ENCODE measurements at regions of chr1 and their contacts with region 1.

Region 1: GRCh38 chr1:66271216-66271903 is 262.6 kb upstream of the SGIP1 start:
- DNase-seq: no peak
- ATAC-seq: peak; percentile 91
- H3K4me3 ChIP-seq: no peak overlapping the region
- H3K27ac ChIP-seq: peak overlapping the region; percentile 75
- H3K4me1 ChIP-seq: peaks cover 57% of the 10 kb centered on the region
- H3K27me3 ChIP-seq: no peaks in the 10 kb centered on the region
- CTCF ChIP-seq: no peak

Region 2: DNA sequence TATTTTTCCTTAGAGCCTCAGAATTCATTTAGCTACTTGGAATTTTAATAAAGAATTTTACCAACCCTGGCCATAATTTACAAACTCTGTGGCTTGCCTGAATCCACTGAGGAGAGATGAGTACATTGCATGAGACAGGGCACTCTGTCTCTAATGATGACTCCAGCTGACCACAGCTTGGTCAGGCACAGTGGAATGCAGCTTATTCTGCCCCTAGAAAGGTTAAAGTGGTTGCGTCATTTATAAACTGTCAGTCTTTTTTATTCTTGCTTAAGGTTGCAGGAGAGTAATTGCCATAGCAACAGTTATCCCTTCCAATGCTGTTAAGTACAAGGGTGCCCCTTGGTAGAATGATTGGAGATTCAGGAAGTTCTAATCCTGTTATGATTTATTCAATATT is 450.4 kb before region 1 on chr1:
- intact Hi-C with region 1: no loop called
- DNase-seq: no peak
- ATAC-seq: peak; percentile 78
- H3K4me3 ChIP-seq: no peak overlapping the region
- H3K27ac ChIP-seq: no peak overlapping the region
- H3K4me1 ChIP-seq: no peaks in the 10 kb centered on the region
- H3K27me3 ChIP-seq: no peaks in the 10 kb centered on the region
- CTCF ChIP-seq: no peak

Region 3: GRCh38 chr1:66197785-66198184 is 73.6 kb before region 1 on chr1:
- intact Hi-C with region 1: no loop called
- DNase-seq: no peak
- ATAC-seq: peak; percentile 27
- H3K4me3 ChIP-seq: no peak overlapping the region
- H3K27ac ChIP-seq: no peak overlapping the region
- H3K4me1 ChIP-seq: no peaks in the 10 kb centered on the region
- H3K27me3 ChIP-seq: no peaks in the 10 kb centered on the region
- CTCF ChIP-seq: no peak

Region 4: GRCh38 chr1:66231217-66231616 is 40.1 kb before region 1 on chr1:
- intact Hi-C with region 1: no loop called
- DNase-seq: no peak
- ATAC-seq: no peak
- H3K4me3 ChIP-seq: no peak overlapping the region
- H3K27ac ChIP-seq: no peak overlapping the region
- H3K4me1 ChIP-seq: no peaks in the 10 kb centered on the region
- H3K27me3 ChIP-seq: peaks cover 4% of the 10 kb centered on the region
- CTCF ChIP-seq: no peak

Region 5: DNA sequence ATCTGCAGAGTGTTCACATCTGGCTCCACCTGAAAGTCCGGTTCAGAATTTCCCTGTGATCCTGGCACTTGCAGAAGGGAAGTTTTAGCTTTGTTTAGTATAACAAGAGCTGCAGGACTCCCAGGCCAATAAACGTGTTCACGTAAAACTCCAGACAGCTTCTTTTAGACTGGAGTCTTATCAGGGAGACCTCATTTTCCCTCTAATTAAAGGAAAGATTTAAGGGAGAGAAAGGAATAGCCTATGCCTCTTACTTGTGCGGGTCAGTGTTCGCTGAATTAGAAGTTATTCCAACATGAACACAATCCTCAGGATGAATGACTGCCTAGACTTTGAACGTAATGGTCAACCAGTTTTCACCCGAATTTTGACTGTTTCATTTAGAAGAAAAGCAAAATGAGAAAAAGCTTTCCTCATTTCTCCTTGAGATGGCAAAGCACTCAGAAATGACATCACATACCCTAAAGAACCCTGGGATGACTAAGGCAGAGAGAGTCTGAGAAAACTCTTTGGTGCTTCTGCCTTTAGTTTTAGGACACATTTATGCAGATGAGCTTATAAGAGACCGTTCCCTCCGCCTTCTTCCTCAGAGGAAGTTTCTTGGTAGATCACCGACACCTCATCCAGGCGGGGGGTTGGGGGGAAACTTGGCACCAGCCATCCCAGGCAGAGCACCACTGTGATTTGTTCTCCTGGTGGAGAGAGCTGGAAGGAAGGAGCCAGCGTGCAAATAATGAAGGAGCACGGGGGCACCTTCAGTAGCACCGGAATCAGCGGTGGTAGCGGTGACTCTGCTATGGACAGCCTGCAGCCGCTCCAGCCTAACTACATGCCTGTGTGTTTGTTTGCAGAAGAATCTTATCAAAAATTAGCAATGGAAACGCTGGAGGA is 60.5 kb after region 1 on chr1:
- intact Hi-C with region 1: loop called (anchors 10 kb)
- DNase-seq: peak; percentile 74
- ATAC-seq: peak; percentile 78
- H3K4me3 ChIP-seq: peak overlapping the region; percentile 63
- H3K27ac ChIP-seq: peak overlapping the region; percentile 82
- H3K4me1 ChIP-seq: peaks cover 22% of the 10 kb centered on the region
- H3K27me3 ChIP-seq: no peaks in the 10 kb centered on the region
- CTCF ChIP-seq: peak; percentile 29

Region 6: DNA sequence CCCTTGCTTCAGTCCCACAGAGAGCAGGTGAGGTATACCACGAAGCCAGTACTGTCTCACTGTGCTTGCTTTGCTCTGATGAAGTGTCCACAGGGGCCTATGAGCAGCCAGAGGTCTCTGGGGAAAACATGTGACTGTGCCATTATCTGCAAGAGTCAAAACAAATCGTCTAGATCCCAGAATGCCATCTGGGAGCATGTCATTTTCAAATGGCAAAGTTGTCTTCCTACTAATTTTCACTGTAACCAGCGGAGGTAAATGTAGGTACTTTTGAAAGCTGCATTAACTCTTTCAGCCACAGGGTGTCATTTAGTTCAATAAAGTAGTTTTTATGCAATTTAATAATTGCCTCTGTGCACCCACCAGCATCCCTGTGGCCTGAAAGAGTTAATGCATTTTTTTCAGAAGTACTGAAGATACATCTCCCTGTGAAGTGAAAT is 88.9 kb after region 1 on chr1:
- intact Hi-C with region 1: no loop called
- DNase-seq: no peak
- ATAC-seq: no peak
- H3K4me3 ChIP-seq: no peak overlapping the region
- H3K27ac ChIP-seq: no peak overlapping the region
- H3K4me1 ChIP-seq: peaks cover 16% of the 10 kb centered on the region
- H3K27me3 ChIP-seq: no peaks in the 10 kb centered on the region
- CTCF ChIP-seq: no peak